Heart left ventricle (tissue), 16 donors: ENCODE measurements at regions of chr20 and their contacts with region 1.

Region 1: GRCh38 chr20:10427060-10427692 is 6.8 kb downstream of the MKKS start:
- DNase-seq: peak in 4 of 5 donors; percentile 28 to 69 (median 52)
- ATAC-seq: peak in 1 of 4 donors; percentile 64
- H3K4me3 ChIP-seq: no peak overlapping the region
- H3K27ac ChIP-seq: no peak overlapping the region
- H3K4me1 ChIP-seq: peaks cover 5 to 60% (median 29%) of the 10 kb centered on the region in 12 donors
- H3K27me3 ChIP-seq: no peaks in the 10 kb centered on the region
- CTCF ChIP-seq: peak; percentile 64 to 87 (median 75)
- POLR2A ChIP-seq: no peak

Region 2: DNA sequence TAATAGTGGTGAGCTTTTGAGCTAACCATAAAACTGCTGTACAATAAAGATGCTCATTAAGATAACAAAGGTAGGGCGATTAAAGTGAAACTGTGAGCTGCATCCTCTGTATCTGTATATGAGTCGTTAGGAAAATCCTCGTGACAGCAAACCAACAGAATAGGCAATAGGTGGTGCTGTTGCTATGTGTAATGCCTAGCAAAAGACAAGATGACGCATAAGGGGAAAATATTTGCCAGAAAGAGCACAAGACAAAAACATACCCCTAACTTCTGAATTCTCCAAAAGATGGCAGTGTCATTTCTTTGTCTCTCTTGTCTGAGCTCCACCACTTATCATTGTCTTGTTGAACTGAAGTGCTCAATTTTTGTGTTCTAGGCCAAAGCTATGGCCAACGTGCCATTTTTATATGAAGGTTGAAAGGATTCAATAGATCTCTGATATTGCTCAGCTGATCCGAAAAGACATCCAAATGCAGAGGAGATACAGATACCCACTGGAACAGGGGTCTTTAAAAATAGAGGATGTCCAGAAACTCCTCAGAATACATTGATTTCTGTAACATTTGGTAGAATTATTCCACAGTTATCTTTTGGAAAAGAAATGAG is 448.7 kb before region 1 on chr20:
- intact Hi-C with region 1: loop called in 9 of 10 experiments (anchors 2 to 5 kb)
- DNase-seq: peak in 2 of 5 donors; percentile 32 to 40
- ATAC-seq: peak; percentile 58 to 91 (median 88)
- H3K4me3 ChIP-seq: no peak overlapping the region
- H3K27ac ChIP-seq: no peak overlapping the region
- H3K4me1 ChIP-seq: peaks cover 0 to 9% (median 0%) of the 10 kb centered on the region in 12 donors
- H3K27me3 ChIP-seq: no peaks in the 10 kb centered on the region
- CTCF ChIP-seq: peak; percentile 54 to 92 (median 78)
- POLR2A ChIP-seq: no peak

Region 3: GRCh38 chr20:10090588-10091166 is 336.5 kb before region 1 on chr20:
- intact Hi-C with region 1: loop called in 2 of 10 experiments (anchors 5 to 10 kb)
- DNase-seq: peak; percentile 22 to 49 (median 31)
- ATAC-seq: peak in 3 of 4 donors; percentile 69 to 81 (median 80)
- H3K4me3 ChIP-seq: no peak overlapping the region
- H3K27ac ChIP-seq: no peak overlapping the region
- H3K4me1 ChIP-seq: no peaks in the 10 kb centered on the region
- H3K27me3 ChIP-seq: no peaks in the 10 kb centered on the region
- CTCF ChIP-seq: peak; percentile 56 to 85 (median 72)
- POLR2A ChIP-seq: no peak

Region 4: GRCh38 chr20:10316582-10316981 is 110.6 kb before region 1 on chr20:
- intact Hi-C with region 1: loop called in 1 of 10 experiments (anchors 10 kb)
- DNase-seq: no peak
- ATAC-seq: no peak
- H3K4me3 ChIP-seq: no peak overlapping the region
- H3K27ac ChIP-seq: no peak overlapping the region
- H3K4me1 ChIP-seq: peaks cover 0 to 10% (median 4%) of the 10 kb centered on the region in 12 donors
- H3K27me3 ChIP-seq: no peaks in the 10 kb centered on the region
- CTCF ChIP-seq: peak in 6 of 12 donors; percentile 18 to 30 (median 22)
- POLR2A ChIP-seq: no peak

Region 5: DNA sequence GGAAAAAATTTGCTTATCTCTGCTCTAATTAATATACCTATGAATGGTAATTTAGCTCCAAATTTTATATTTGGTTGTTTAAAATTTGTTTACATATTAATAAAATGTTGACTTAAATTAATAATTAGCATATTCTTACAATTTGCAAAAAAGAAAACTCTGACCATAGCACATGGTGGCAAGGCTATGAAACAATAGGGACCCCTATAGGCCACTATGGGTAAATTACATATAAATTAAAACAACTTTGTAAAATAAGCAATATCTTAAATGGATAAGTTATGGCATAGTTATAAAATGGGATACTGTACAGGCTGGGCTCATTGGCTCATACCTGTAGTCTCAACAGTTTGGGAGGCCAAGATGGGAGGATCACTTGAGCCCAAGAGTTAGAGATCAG is 69.2 kb before region 1 on chr20:
- intact Hi-C with region 1: loop called in 1 of 10 experiments (anchors 5 kb)
- DNase-seq: no peak
- ATAC-seq: no peak
- H3K4me3 ChIP-seq: no peak overlapping the region
- H3K27ac ChIP-seq: no peak overlapping the region
- H3K4me1 ChIP-seq: peaks cover 0 to 14% (median 0%) of the 10 kb centered on the region in 12 donors
- H3K27me3 ChIP-seq: no peaks in the 10 kb centered on the region
- CTCF ChIP-seq: peak in 9 of 12 donors; percentile 16 to 42 (median 36)
- POLR2A ChIP-seq: no peak